MCF 10A (cell line): ENCODE measurements at regions of chr2 and their contacts with region 1.

Region 1: DNA sequence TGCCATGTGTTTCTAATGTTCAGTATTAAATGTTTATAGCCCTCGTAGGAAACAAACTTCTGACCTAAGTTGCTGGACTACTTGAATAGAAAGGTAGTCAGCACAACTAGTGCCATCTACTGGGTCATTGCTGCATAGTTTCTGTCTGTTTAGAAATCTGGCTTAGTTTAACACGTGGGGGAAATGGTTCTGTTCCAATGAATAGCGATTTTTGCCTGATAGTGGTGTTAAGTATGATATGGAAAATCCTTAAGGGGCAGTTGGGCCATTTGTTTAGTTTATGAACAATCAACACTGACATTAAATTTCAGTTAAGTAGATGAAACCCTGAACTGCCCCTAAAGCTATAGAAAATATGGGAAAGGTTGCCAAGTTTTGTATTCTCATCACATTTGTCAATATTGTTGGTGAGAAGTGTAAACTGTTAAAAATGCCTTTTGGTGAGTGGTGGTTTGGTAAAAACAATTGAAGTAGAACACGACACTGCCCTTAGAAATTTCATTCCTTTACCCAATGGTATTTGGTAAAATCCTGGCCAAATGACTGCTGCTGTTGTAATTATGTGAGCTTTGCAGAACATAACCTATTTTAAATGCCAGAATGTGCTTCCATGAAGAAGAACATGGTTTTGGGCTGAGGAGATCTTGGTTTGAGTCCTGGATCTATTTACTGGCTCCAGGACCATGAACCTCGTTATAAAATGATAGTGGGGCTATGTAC is 13.2 kb downstream of the NABP1 start:
- DNase-seq: peak; percentile 77
- H3K4me3 Mint-ChIP-seq: peak overlapping the region; percentile 32
- H3K27ac Mint-ChIP-seq: peak overlapping the region; percentile 72
- H3K4me1 Mint-ChIP-seq: peaks cover 34% of the 10 kb centered on the region
- H3K27me3 Mint-ChIP-seq: no peaks in the 10 kb centered on the region
- CTCF ChIP-seq: peak; percentile 66

Region 2: DNA sequence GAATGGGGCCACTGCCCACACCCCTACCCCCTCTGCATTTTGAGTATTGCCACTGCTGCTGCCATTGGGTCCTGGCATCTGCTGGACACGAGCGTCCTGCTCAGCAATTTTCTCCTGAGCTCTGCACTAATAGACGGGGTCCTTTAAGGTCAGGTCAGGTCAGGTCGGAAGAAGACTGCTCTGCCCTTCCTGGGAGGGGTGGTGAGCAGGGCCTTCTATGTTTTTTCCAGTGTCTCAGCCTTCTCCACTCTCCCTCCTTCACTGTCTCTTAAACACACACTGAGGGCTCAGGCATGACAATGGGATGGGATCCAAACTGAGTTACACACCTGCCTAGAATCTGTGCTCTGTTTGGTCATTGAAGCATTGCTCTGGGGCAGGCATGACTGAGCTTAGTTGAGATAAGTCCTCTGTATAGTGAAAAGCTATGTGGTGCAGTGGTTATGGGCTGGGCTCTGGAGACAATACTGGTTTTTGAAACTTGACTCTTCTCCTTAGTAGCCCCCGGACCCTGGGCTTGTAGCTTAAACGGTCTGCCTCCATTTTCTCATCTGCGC is 435.3 kb before region 1 on chr2:
- CTCF ChIA-PET with region 1: no interaction called
- POLR2A ChIA-PET with region 1: no interaction called
- intact Hi-C with region 1: no loop called
- DNase-seq: no peak
- H3K4me3 Mint-ChIP-seq: no peak overlapping the region
- H3K27ac Mint-ChIP-seq: peak overlapping the region; percentile 32
- H3K4me1 Mint-ChIP-seq: peaks cover 42% of the 10 kb centered on the region
- H3K27me3 Mint-ChIP-seq: no peaks in the 10 kb centered on the region
- CTCF ChIP-seq: no peak

Region 3: DNA sequence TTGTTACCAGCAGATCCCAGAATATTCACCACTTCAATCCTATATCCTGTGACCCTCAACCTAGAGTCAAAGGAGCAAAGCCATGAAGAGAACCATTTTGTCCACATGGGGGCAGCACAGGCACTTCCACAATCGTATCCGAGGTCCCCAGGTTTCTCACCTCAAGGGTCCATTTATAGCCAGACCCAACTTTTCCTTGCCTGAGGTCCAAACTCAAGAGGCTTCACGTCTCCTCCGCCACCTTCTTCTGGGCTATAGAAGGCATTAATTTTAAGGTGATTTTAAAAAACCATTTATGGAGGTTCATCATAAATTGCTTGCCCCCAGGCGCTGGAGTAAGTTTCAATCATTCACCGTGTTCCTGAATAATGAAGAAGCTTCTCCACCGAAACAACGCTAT is 124.8 kb before region 1 on chr2:
- CTCF ChIA-PET with region 1: interaction called, 72 read pairs
- POLR2A ChIA-PET with region 1: interaction called, 17 read pairs
- intact Hi-C with region 1: loop called (anchors 1 kb)
- DNase-seq: peak; percentile 80
- H3K4me3 Mint-ChIP-seq: no peak overlapping the region
- H3K27ac Mint-ChIP-seq: no peak overlapping the region
- H3K4me1 Mint-ChIP-seq: no peaks in the 10 kb centered on the region
- H3K27me3 Mint-ChIP-seq: no peaks in the 10 kb centered on the region
- CTCF ChIP-seq: peak; percentile 76

Region 4: DNA sequence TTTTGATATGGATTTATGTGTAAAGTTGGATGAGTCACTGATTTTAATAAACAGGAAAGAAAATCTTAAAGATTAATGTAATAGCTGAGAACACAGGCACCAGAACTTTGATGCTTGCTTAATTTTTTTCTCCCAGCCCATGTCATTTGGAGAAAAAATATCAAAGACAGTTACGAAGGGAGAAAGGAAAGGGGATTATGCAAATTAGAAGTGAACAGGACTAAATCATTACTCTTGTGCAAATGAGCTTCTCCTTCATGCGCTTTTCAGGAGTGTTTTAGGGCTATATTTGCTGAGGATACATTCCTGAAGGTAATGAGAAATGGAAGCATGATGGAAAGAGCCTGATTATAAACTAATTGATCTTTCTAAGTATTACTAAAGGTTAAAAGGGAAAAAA is 15.6 kb after region 1 on chr2:
- CTCF ChIA-PET with region 1: interaction called, 5 read pairs
- POLR2A ChIA-PET with region 1: interaction called, 23 read pairs
- intact Hi-C with region 1: no loop called
- DNase-seq: no peak
- H3K4me3 Mint-ChIP-seq: no peak overlapping the region
- H3K27ac Mint-ChIP-seq: no peak overlapping the region
- H3K4me1 Mint-ChIP-seq: peaks cover 7% of the 10 kb centered on the region
- H3K27me3 Mint-ChIP-seq: no peaks in the 10 kb centered on the region
- CTCF ChIP-seq: no peak